ENCODE measurements at regions of chr5 and their contacts with region 1.

Region 1: GRCh38 chr5:89445106-89445745 is 562.2 kb upstream of the MEF2C start:
- DNase-seq: no peak
- ATAC-seq: no peak
- H3K4me3 Mint-ChIP-seq: peak overlapping the region; percentile 15
- H3K27ac Mint-ChIP-seq: peak overlapping the region; percentile 88
- H3K4me1 Mint-ChIP-seq: peaks cover 80% of the 10 kb centered on the region
- H3K27me3 Mint-ChIP-seq: no peaks in the 10 kb centered on the region
- CTCF ChIP-seq: no peak

Region 2: DNA sequence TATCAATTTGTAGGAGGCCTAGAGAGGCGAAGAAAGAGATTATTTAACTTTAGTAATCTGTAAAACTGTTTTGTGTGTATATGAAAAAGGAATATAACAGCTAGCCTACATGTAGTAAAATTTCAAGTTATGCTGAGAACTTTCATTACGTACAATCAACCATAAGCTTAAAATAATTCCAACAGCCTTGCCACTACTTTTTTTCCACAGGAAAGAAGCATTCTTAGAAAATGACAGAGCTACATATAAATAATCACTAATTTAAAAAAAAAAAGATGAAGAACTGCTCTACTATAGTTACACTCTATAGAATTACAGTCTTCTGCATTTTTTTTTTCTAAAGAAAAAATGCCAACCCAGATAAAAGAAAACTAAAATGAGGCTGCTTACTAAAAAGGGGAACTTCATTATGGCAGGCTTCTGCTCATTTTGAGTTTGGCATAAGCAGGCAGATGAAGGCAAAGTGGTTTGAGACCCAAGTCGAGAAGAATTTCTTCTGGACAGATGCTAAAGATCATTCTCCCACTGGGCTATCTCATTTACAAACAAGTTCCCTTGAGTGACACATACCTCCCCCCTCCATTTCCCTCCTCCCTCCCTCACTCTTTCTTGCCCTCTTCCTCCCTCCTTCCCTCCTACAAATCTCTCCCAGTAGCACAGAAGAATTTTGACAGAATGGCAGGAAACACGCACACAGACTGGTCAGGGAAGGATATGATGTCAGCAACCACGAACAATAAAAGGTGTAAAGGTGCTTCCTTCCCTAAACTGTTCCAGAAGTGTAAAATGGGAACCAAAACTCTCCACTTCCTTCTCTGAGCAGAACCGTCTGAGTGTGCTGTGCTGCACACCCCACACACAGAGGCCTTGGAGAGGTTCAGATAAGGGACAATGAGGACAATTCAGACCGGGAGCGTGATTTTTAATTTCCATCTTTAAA is 618.3 kb before region 1 on chr5:
- CTCF ChIA-PET with region 1: no interaction called
- POLR2A ChIA-PET with region 1: no interaction called
- intact Hi-C with region 1: loop called (anchors 5 kb)
- DNase-seq: peak; percentile 31
- ATAC-seq: peak; percentile 77
- H3K4me3 Mint-ChIP-seq: peak overlapping the region; percentile 72
- H3K27ac Mint-ChIP-seq: peak overlapping the region; percentile 91
- H3K4me1 Mint-ChIP-seq: peaks cover 93% of the 10 kb centered on the region
- H3K27me3 Mint-ChIP-seq: no peaks in the 10 kb centered on the region
- CTCF ChIP-seq: no peak

Region 3: DNA sequence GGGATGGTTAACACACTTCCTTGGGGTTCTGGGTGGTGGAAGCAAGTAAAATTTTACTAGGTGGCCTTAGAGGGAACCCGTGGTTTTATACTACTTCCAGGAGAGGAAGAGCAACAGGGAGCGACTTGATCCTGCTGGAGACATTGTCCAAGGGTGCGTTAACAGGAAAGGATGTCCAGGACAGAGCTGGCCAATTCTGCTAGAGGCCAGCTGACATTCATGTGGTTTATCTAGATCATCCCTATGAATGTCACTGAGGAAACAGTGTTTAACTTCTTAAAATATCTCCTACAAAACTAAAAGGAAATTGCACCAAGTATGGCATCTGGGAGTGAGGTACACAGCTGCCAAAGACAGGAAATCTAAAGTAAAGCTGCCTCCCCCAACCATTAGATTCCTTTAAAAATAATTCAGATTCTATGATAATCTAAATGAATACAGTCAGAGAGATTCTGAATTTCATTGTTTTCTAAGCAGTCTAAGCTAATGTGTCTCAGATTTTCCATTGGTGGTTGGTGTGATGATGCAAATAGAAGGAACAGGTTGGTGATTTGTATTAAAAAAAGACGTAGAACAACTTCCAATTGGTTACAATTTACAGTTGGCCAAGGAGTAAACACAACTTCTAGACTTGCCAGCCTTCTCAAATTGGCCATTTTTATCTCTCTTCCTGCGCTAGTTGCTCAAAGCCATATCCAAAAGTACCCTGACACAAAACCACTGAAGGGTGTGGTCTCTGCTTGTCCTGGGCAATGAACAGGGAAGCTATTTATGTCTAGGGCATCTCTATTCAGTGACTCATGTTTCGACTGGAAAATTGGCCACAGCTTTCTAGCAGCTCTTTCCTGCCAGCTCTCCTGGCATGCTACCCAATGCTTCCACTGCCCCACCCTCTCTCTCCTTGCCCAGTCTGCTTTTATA is 12.4 kb after region 1 on chr5:
- CTCF ChIA-PET with region 1: no interaction called
- POLR2A ChIA-PET with region 1: interaction called, 10 read pairs
- intact Hi-C with region 1: loop called (anchors 1 kb)
- DNase-seq: no peak
- ATAC-seq: peak; percentile 56
- H3K4me3 Mint-ChIP-seq: peak overlapping the region; percentile 29
- H3K27ac Mint-ChIP-seq: peak overlapping the region; percentile 89
- H3K4me1 Mint-ChIP-seq: peaks cover 47% of the 10 kb centered on the region
- H3K27me3 Mint-ChIP-seq: no peaks in the 10 kb centered on the region
- CTCF ChIP-seq: no peak

Region 4: DNA sequence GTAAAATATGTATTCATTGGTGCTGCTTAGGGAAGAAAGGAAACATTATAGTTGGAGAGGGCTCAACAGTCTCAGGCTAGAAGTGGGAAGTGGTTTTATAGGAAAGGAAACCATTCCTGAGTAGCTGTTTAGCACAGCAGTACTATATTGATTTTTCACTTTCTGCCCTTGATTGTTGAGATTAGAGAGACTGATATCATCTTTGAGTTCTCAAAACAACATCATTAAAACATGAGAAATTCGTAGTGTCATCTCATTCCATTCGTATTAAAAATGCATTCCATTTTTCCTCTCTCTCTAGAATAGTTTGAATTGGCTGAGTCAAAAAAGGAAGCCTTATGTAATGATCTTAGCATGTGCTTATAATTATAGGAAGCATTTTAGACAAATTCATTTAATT is 1043.6 kb after region 1 on chr5:
- CTCF ChIA-PET with region 1: no interaction called
- POLR2A ChIA-PET with region 1: no interaction called
- intact Hi-C with region 1: no loop called
- DNase-seq: no peak
- ATAC-seq: no peak
- H3K4me3 Mint-ChIP-seq: no peak overlapping the region
- H3K27ac Mint-ChIP-seq: no peak overlapping the region
- H3K4me1 Mint-ChIP-seq: no peaks in the 10 kb centered on the region
- H3K27me3 Mint-ChIP-seq: no peaks in the 10 kb centered on the region
- CTCF ChIP-seq: no peak

Measured in activated B cell treated with CpG ODN at 0.5 μM for 24 hours (primary cell).